Psoas muscle (tissue), 8 donors: ENCODE measurements at regions of chr20 and their contacts with region 1.

Region 1: DNA sequence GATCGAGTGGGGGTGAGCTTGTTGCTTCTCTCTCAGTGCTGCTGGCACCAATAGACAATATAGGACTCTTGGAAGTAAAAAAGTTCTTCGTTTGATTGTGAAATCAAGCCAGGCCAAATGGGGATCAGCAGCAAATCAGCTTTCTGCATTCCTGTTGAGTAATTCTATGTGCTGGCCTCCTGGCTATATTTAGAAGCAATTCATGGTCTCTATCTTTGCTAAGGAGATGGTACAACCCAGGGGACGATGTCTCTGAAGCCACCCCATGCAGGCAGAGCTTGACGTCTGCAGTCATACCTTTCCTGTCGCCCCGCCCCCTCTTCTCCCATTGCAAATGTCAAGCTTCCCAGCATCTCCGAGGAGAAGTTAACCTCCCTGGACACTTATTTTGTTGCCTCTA is 199.1 kb downstream of the SCP2D1 start:
- DNase-seq: no peak
- ATAC-seq: peak; percentile 72 to 94 (median 84)
- H3K4me3 ChIP-seq: no peak overlapping the region
- H3K27ac ChIP-seq: no peak overlapping the region
- H3K4me1 ChIP-seq: peaks cover 11% of the 10 kb centered on the region
- H3K27me3 ChIP-seq: no peaks in the 10 kb centered on the region
- CTCF ChIP-seq: no peak

Region 2: DNA sequence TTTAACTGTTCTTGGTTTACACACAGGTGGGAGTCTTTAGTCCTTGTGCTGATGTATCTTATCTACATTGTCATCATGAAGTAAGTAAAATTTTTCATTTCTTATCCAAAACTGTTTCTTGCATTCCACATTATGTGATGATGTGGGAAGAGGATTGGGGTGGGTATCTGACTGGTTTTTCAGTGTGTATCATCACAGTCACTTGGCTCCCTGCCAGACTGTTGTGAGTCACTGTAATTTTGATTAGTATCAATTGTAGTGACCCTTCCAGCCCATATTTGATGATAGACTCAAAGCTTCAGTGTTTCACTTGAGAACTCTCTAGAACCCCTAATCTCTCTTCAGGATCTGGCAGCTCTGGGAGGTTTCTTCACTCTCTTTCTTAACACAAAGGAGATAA is 660.9 kb after region 1 on chr20:
- intact Hi-C with region 1: loop called in 1 of 2 experiments (anchors 2 kb)
- DNase-seq: no peak
- ATAC-seq: no peak
- H3K4me3 ChIP-seq: no peak overlapping the region
- H3K27ac ChIP-seq: no peak overlapping the region
- H3K4me1 ChIP-seq: peaks cover 15% of the 10 kb centered on the region
- H3K27me3 ChIP-seq: no peaks in the 10 kb centered on the region
- CTCF ChIP-seq: no peak